Naive thymus-derived CD4-positive, alpha-beta T cell (primary cell): ENCODE measurements at regions of chr14 and their contacts with region 1.

Region 1: GRCh38 chr14:78519856-78520255 is 349.7 kb downstream of the NRXN3 start:
- DNase-seq: peak in 2 of 9 donors; percentile 3 to 21
- ATAC-seq: no peak
- H3K4me3 ChIP-seq: no peak overlapping the region
- H3K4me3 Mint-ChIP-seq: no peak overlapping the region
- H3K27ac ChIP-seq: no peak overlapping the region
- H3K27ac Mint-ChIP-seq: no peak overlapping the region
- H3K4me1 ChIP-seq: no peaks in the 10 kb centered on the region
- H3K4me1 Mint-ChIP-seq: no peaks in the 10 kb centered on the region
- H3K27me3 ChIP-seq: no peaks in the 10 kb centered on the region
- H3K27me3 Mint-ChIP-seq: no peaks in the 10 kb centered on the region

Region 2: DNA sequence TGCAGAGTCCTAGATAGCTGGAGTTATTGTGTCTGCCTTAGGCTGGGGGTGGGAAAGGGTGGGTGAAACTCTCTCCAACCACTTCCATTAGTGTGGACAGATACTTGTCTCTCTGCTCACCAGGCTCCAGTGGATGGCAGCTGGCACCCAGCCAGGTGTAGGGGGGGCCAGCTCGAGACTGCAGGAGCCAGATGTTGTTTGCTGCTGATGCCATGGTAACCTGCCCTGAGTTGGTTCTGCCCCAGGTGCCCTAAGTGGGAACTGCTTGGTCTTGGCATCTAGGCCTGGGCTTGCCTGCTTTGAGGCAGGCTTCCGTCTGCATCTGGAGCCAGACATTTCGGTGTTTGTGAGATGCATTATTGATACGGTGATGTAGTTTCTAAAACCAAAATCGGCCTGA is 637.8 kb before region 1 on chr14:
- CTCF ChIA-PET with region 1: no interaction called
- POLR2A ChIA-PET with region 1: no interaction called
- intact Hi-C with region 1: no loop called
- DNase-seq: no peak
- ATAC-seq: no peak
- H3K4me3 ChIP-seq: no peak overlapping the region
- H3K4me3 Mint-ChIP-seq: no peak overlapping the region
- H3K27ac ChIP-seq: no peak overlapping the region
- H3K27ac Mint-ChIP-seq: peak overlapping the region in 1 of 9 donors; percentile 51
- H3K4me1 ChIP-seq: no peaks in the 10 kb centered on the region
- H3K4me1 Mint-ChIP-seq: peaks cover 0 to 5% (median 0%) of the 10 kb centered on the region in 7 donors
- H3K27me3 ChIP-seq: no peaks in the 10 kb centered on the region
- H3K27me3 Mint-ChIP-seq: no peaks in the 10 kb centered on the region

Region 3: GRCh38 chr14:78074561-78074960 is 445.3 kb before region 1 on chr14:
- CTCF ChIA-PET with region 1: no interaction called
- POLR2A ChIA-PET with region 1: no interaction called
- intact Hi-C with region 1: no loop called
- DNase-seq: no peak
- ATAC-seq: no peak
- H3K4me3 ChIP-seq: no peak overlapping the region
- H3K4me3 Mint-ChIP-seq: no peak overlapping the region
- H3K27ac ChIP-seq: no peak overlapping the region
- H3K27ac Mint-ChIP-seq: no peak overlapping the region
- H3K4me1 ChIP-seq: no peaks in the 10 kb centered on the region
- H3K4me1 Mint-ChIP-seq: no peaks in the 10 kb centered on the region
- H3K27me3 ChIP-seq: no peaks in the 10 kb centered on the region
- H3K27me3 Mint-ChIP-seq: peaks cover 0 to 20% (median 2%) of the 10 kb centered on the region in 5 donors

Region 4: GRCh38 chr14:78153064-78153341 is 366.9 kb before region 1 on chr14:
- CTCF ChIA-PET with region 1: no interaction called
- POLR2A ChIA-PET with region 1: no interaction called
- intact Hi-C with region 1: no loop called
- DNase-seq: no peak
- ATAC-seq: no peak
- H3K4me3 ChIP-seq: no peak overlapping the region
- H3K4me3 Mint-ChIP-seq: no peak overlapping the region
- H3K27ac ChIP-seq: no peak overlapping the region
- H3K27ac Mint-ChIP-seq: no peak overlapping the region
- H3K4me1 ChIP-seq: no peaks in the 10 kb centered on the region
- H3K4me1 Mint-ChIP-seq: peaks cover 0 to 8% (median 0%) of the 10 kb centered on the region in 7 donors
- H3K27me3 ChIP-seq: no peaks in the 10 kb centered on the region
- H3K27me3 Mint-ChIP-seq: peaks cover 0 to 42% (median 23%) of the 10 kb centered on the region in 5 donors

Region 5: GRCh38 chr14:78530078-78530477 is 10.2 kb after region 1 on chr14:
- CTCF ChIA-PET with region 1: no interaction called
- POLR2A ChIA-PET with region 1: no interaction called
- intact Hi-C with region 1: loop called in 1 of 2 experiments (anchors 1 kb)
- DNase-seq: peak in 1 of 9 donors; percentile 1
- ATAC-seq: no peak
- H3K4me3 ChIP-seq: no peak overlapping the region
- H3K4me3 Mint-ChIP-seq: no peak overlapping the region
- H3K27ac ChIP-seq: no peak overlapping the region
- H3K27ac Mint-ChIP-seq: no peak overlapping the region
- H3K4me1 ChIP-seq: no peaks in the 10 kb centered on the region
- H3K4me1 Mint-ChIP-seq: no peaks in the 10 kb centered on the region
- H3K27me3 ChIP-seq: no peaks in the 10 kb centered on the region
- H3K27me3 Mint-ChIP-seq: no peaks in the 10 kb centered on the region